MCF 10A (cell line): ENCODE measurements at regions of chr14 and their contacts with region 1.

Region 1: DNA sequence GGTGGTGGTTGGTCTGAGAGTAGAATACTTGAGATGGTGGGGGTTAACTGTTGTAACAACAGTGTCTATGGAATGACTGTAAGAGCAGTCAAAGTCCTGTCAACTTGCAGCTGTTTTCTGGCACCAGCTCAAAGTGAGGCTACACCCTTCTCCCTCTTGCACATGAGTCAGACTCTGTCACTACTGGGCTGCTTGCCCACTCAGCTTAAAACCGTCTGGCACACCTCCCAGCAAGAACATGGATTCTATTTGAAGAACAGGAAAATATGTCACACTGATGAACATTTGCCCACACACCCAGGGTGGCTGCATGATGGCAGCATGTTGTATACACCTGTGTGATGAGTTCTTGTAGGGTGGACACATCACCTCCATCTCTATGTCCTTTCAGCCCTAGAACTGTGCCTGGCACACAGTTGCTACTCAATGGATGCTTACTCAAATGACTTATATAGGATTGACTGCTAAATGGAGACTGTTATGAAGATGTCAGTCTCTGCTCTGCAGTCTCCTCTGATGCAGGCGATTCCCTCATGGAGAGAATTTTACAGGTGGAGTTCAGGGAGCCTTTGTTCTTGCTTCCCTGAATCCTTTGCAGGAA is 19.3 kb upstream of the SERPINA6 start:
- DNase-seq: peak; percentile 100
- H3K4me3 Mint-ChIP-seq: no peak overlapping the region
- H3K27ac Mint-ChIP-seq: peak overlapping the region; percentile 28
- H3K4me1 Mint-ChIP-seq: peaks cover 41% of the 10 kb centered on the region
- H3K27me3 Mint-ChIP-seq: no peaks in the 10 kb centered on the region
- CTCF ChIP-seq: no peak

Region 2: DNA sequence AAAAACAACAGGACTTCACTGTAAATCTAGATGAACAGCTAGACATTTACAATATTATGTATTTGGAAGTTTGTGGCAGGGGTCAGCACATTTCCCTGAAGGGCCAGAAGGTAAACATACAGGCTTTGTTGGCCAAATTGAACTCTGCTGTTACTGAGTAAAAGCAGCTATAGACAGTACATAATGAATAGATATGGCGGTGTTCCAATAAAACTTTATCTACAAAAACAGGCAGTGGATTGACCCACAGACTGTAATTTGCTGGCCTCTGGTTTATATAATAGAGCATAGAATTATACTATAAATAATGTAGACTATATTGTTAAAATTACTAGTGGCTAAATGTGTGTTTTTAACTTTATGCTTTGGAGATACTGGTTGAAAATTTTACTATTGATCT is 75.1 kb before region 1 on chr14:
- CTCF ChIA-PET with region 1: no interaction called
- POLR2A ChIA-PET with region 1: no interaction called
- intact Hi-C with region 1: no loop called
- DNase-seq: no peak
- H3K4me3 Mint-ChIP-seq: no peak overlapping the region
- H3K27ac Mint-ChIP-seq: no peak overlapping the region
- H3K4me1 Mint-ChIP-seq: no peaks in the 10 kb centered on the region
- H3K27me3 Mint-ChIP-seq: no peaks in the 10 kb centered on the region
- CTCF ChIP-seq: no peak

Region 3: GRCh38 chr14:94317259-94317658 is 25.2 kb before region 1 on chr14:
- CTCF ChIA-PET with region 1: interaction called, 3 read pairs
- POLR2A ChIA-PET with region 1: interaction called, 27 read pairs
- intact Hi-C with region 1: no loop called
- DNase-seq: peak; percentile 67
- H3K4me3 Mint-ChIP-seq: no peak overlapping the region
- H3K27ac Mint-ChIP-seq: no peak overlapping the region
- H3K4me1 Mint-ChIP-seq: peaks cover 32% of the 10 kb centered on the region
- H3K27me3 Mint-ChIP-seq: no peaks in the 10 kb centered on the region
- CTCF ChIP-seq: no peak

Region 4: DNA sequence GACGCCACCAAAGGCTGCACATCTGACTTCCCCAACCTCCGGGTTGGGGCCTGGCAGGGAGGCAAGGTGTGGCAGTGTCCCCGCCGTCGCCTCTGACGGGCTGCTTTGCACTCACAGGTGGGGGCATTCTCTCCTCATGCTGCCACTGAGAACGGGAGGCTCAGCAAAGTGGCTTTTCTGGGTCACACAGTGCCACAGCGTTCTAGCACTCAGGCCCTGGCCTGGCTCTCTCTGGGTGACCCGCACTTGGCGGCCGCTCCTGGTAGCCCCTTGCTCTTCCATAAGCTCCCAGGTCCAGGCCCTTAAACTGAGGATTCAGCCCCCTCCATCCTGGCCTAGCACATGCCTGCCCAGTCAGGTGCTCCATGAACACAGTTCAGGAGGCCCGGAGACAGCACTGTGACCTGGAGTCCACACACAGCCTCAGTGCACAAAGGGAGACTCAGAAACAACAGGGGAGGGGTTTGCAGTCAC is 20.8 kb after region 1 on chr14:
- CTCF ChIA-PET with region 1: no interaction called
- POLR2A ChIA-PET with region 1: no interaction called
- intact Hi-C with region 1: no loop called
- DNase-seq: no peak
- H3K4me3 Mint-ChIP-seq: no peak overlapping the region
- H3K27ac Mint-ChIP-seq: no peak overlapping the region
- H3K4me1 Mint-ChIP-seq: peaks cover 11% of the 10 kb centered on the region
- H3K27me3 Mint-ChIP-seq: no peaks in the 10 kb centered on the region
- CTCF ChIP-seq: no peak

Region 5: DNA sequence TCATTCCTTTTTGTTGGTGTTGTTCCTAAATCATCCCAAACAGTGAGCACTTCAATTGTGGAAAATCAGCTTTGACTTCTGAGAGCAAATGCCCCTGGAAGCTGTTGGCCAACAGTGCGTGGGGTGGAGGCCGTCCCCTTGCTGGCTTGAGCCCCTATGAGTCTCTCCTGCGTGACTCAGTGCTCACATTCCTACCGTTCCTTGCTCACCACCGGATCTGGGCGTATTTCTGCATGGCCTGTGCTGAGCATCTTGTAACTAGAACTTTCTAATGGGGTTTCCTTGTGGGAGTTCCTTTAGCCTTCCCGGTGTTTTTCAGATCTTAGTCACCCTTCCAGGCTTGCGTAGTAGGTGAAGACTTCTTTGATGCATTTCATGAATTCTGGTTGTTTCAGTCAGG is 31.3 kb after region 1 on chr14:
- CTCF ChIA-PET with region 1: interaction called, 3 read pairs
- POLR2A ChIA-PET with region 1: interaction called, 4 read pairs
- intact Hi-C with region 1: loop called (anchors 2 kb)
- DNase-seq: peak; percentile 96
- H3K4me3 Mint-ChIP-seq: no peak overlapping the region
- H3K27ac Mint-ChIP-seq: peak overlapping the region; percentile 83
- H3K4me1 Mint-ChIP-seq: peaks cover 20% of the 10 kb centered on the region
- H3K27me3 Mint-ChIP-seq: no peaks in the 10 kb centered on the region
- CTCF ChIP-seq: no peak

Region 6: GRCh38 chr14:94423453-94424056 is 81.1 kb after region 1 on chr14:
- CTCF ChIA-PET with region 1: no interaction called
- POLR2A ChIA-PET with region 1: no interaction called
- intact Hi-C with region 1: no loop called
- DNase-seq: peak; percentile 71
- H3K4me3 Mint-ChIP-seq: peak overlapping the region; percentile 22
- H3K27ac Mint-ChIP-seq: no peak overlapping the region
- H3K4me1 Mint-ChIP-seq: no peaks in the 10 kb centered on the region
- H3K27me3 Mint-ChIP-seq: no peaks in the 10 kb centered on the region
- CTCF ChIP-seq: peak; percentile 32